ENCODE measurements at regions of chr12 and their contacts with region 1.

Region 1: DNA sequence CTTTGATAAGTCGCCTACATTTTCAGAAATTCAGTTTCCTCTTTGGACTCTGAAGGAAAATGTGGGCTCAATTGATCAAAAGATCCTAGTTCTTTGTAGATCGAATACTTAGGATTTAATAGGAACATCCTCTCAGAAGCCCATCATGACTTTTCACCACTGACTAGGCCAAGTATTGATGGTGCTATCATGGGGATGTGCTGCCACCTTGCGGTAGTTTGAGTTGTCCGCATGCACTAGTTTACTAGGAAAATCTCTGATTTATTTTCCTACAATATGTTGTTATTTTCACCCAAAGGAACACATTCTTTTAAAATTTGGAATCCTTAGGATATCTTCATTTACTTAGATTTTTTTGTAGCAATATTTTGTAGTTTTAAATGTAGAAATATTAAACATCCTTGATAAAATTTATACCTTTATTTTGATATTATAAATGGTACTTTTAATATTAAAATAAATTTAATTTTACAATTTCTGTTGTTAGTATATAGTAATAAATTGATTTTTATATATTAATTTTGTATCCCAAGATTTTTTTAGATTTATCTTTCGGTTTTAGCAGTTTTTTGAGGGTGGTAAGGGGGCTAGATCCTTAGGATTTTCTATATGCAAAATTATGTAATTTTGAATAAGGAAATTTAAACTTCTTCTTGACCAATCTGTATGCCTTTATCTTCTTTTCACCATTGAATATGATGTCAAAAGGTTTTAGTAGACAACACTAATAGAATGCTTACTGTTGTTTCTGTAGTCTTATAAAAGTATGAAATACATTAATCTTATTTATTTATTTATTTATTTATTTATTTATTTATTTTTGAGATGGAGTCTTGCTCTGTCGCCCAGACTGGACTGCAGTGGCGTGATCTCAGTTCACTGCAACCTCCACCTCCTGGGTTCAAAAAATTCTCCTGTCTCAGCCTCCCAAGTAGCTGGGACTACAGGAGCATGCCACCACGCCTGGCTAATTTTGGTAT is 52.9 kb upstream of the OR9K2 start:
- DNase-seq: peak; percentile 83
- ATAC-seq: peak; percentile 60
- H3K4me3 ChIP-seq: no peak overlapping the region
- H3K4me3 Mint-ChIP-seq: no peak overlapping the region
- H3K27ac ChIP-seq: no peak overlapping the region
- H3K27ac Mint-ChIP-seq: no peak overlapping the region
- H3K4me1 ChIP-seq: peaks cover 0 to 10% of the 10 kb centered on the region in 2 donors
- H3K4me1 Mint-ChIP-seq: peaks cover 18% of the 10 kb centered on the region
- H3K27me3 ChIP-seq: peaks cover 0 to under 1% (median 0%) of the 10 kb centered on the region in 4 experiments
- H3K27me3 Mint-ChIP-seq: peaks cover 4% of the 10 kb centered on the region
- CTCF ChIP-seq: peak; percentile 96

Region 2: GRCh38 chr12:54749191-54749818 is 324.0 kb before region 1 on chr12:
- CTCF ChIA-PET with region 1: interaction called, 78 read pairs
- POLR2A ChIA-PET with region 1: no interaction called
- intact Hi-C with region 1: loop called (anchors 1 kb)
- DNase-seq: peak; percentile 72
- ATAC-seq: peak; percentile 43
- H3K4me3 ChIP-seq: no peak overlapping the region
- H3K4me3 Mint-ChIP-seq: peak overlapping the region; percentile 35
- H3K27ac ChIP-seq: no peak overlapping the region
- H3K27ac Mint-ChIP-seq: no peak overlapping the region
- H3K4me1 ChIP-seq: no peaks in the 10 kb centered on the region
- H3K4me1 Mint-ChIP-seq: peaks cover 5% of the 10 kb centered on the region
- H3K27me3 ChIP-seq: no peaks in the 10 kb centered on the region
- H3K27me3 Mint-ChIP-seq: peaks cover 19% of the 10 kb centered on the region
- CTCF ChIP-seq: peak; percentile 85

Region 3: DNA sequence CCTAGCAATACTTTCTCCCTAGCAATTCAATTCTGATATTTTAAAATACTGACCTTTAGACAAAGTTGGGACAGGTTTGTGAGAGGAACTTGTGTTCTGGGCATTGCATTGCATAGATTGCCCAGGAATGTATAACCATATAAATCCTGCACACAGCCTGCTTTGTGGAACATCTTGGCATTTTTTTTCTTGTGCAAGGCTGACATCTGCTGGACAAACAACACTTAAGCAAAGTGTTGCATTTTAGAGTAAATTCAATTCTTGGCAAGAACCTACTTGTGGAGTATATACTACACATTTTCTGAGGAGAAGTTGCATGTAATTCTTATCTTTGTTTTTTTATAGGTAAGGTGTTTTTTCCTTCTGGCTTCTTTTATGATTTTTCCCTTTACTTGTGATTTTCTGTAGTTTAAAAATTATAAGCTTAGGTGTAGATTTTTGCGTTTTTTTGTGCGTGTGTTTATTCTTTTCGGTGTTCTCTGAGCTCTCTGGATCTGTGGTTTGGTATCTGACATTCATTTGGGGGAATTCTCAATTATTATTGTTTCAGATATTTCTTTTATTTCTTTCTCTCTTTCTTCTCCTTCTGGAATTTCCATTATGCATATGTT is 115.2 kb before region 1 on chr12:
- CTCF ChIA-PET with region 1: interaction called, 16 read pairs
- POLR2A ChIA-PET with region 1: no interaction called
- intact Hi-C with region 1: no loop called
- DNase-seq: peak; percentile 60
- ATAC-seq: no peak
- H3K4me3 ChIP-seq: no peak overlapping the region
- H3K4me3 Mint-ChIP-seq: no peak overlapping the region
- H3K27ac ChIP-seq: no peak overlapping the region
- H3K27ac Mint-ChIP-seq: no peak overlapping the region
- H3K4me1 ChIP-seq: peaks cover 6 to 11% of the 10 kb centered on the region in 2 donors
- H3K4me1 Mint-ChIP-seq: peaks cover 16% of the 10 kb centered on the region
- H3K27me3 ChIP-seq: no peaks in the 10 kb centered on the region
- H3K27me3 Mint-ChIP-seq: no peaks in the 10 kb centered on the region
- CTCF ChIP-seq: peak; percentile 77

Region 4: GRCh38 chr12:54993161-54993835 is 80.0 kb before region 1 on chr12:
- CTCF ChIA-PET with region 1: interaction called, 647 read pairs
- POLR2A ChIA-PET with region 1: no interaction called
- intact Hi-C with region 1: loop called (anchors 1 kb)
- DNase-seq: peak; percentile 84
- ATAC-seq: peak; percentile 70
- H3K4me3 ChIP-seq: no peak overlapping the region
- H3K4me3 Mint-ChIP-seq: peak overlapping the region; percentile 33
- H3K27ac ChIP-seq: no peak overlapping the region
- H3K27ac Mint-ChIP-seq: peak overlapping the region; percentile 71
- H3K4me1 ChIP-seq: peaks cover 38 to 42% of the 10 kb centered on the region in 2 donors
- H3K4me1 Mint-ChIP-seq: peaks cover 42% of the 10 kb centered on the region
- H3K27me3 ChIP-seq: no peaks in the 10 kb centered on the region
- H3K27me3 Mint-ChIP-seq: no peaks in the 10 kb centered on the region
- CTCF ChIP-seq: peak; percentile 92

Region 5: DNA sequence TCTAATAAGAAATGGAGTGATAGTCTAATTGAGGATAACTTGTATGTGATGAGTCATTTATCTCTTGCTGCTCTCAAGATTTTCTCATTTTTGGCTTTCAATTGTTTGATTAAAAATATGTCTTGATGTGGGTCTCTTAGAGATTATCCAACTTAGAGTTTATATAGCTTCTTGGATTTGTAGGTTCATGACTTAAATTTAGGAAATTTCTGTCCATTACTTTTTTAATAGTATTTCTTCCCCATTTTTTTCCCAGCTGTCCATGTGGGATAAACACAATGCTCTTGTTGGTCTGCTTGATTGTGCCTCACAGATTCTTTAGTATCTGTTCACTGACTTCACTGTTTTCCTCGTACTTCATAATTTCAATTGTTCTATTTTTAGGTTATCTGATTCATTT is 334.5 kb after region 1 on chr12:
- CTCF ChIA-PET with region 1: no interaction called
- POLR2A ChIA-PET with region 1: no interaction called
- intact Hi-C with region 1: no loop called
- DNase-seq: no peak
- ATAC-seq: no peak
- H3K4me3 ChIP-seq: no peak overlapping the region
- H3K4me3 Mint-ChIP-seq: no peak overlapping the region
- H3K27ac ChIP-seq: no peak overlapping the region
- H3K27ac Mint-ChIP-seq: no peak overlapping the region
- H3K4me1 ChIP-seq: no peaks in the 10 kb centered on the region
- H3K4me1 Mint-ChIP-seq: no peaks in the 10 kb centered on the region
- H3K27me3 ChIP-seq: no peaks in the 10 kb centered on the region
- H3K27me3 Mint-ChIP-seq: peaks cover 4% of the 10 kb centered on the region
- CTCF ChIP-seq: no peak